HAP-1 (cell line): ENCODE measurements at regions of chr11 and their contacts with region 1.

Region 1: GRCh38 chr11:12900496-12900895 is 108.6 kb upstream of the RASSF10 start:
- DNase-seq: no peak
- H3K4me3 ChIP-seq: no peak overlapping the region
- H3K4me1 ChIP-seq: no peaks in the 10 kb centered on the region
- H3K27me3 ChIP-seq: no peaks in the 10 kb centered on the region

Region 2: GRCh38 chr11:12319988-12320387 is 580.5 kb before region 1 on chr11:
- in situ Hi-C with region 1: loop called (anchors 10 kb)
- DNase-seq: no peak
- H3K4me3 ChIP-seq: no peak overlapping the region; the same call in 1 of the 2 replicates
- H3K4me1 ChIP-seq: peaks cover 33% of the 10 kb centered on the region
- H3K27me3 ChIP-seq: no peaks in the 10 kb centered on the region

Region 3: DNA sequence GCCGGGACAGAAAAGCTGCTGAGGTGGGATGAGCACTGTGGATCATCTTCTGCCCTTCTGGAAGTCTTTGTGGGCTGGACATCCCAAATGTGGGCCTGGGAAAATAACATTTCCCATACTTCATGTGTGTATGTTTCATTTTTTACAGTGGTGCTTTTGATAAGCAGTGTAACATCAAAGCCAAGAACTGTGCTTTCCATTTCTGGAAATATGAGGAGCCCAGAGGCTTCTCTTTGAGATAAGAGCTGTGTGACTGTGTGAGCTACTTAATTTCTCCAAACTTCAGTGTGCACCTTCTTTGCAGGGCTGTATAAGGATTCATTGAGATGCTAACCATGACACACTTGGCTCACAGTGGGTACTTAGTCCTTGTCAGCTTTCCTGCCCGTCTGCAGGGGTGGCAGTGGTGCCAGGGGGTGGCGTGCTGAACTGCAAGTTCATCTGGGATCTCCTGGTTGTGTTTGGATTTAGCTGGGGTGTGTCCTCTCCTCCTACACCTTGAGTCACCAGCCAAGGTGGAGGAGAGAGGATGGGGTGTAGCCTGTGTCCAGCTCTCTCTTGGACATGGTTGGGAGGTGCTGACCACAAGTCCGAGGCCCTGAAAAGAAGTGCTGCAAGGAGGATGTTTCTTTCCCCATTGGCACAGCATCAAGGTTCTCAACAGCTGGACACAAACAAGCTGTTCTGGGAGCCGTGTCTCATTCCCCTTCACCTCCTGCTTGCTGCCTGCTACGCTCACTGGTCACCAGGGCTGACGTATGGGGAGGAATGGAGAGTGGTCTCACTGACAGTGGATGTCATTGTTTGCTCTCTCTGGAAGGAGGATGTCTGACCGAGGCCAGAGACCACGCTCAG is 86.9 kb before region 1 on chr11:
- in situ Hi-C with region 1: no loop called
- DNase-seq: no peak
- H3K4me3 ChIP-seq: no peak overlapping the region
- H3K4me1 ChIP-seq: peaks cover 15% of the 10 kb centered on the region
- H3K27me3 ChIP-seq: no peaks in the 10 kb centered on the region

Region 4: GRCh38 chr11:13745165-13745564 is 844.7 kb after region 1 on chr11:
- in situ Hi-C with region 1: no loop called
- DNase-seq: no peak
- H3K4me3 ChIP-seq: no peak overlapping the region
- H3K4me1 ChIP-seq: no peaks in the 10 kb centered on the region
- H3K27me3 ChIP-seq: peaks cover 3% of the 10 kb centered on the region